ENCODE measurements at regions of chrX and their contacts with region 1.

Region 1: GRCh38 chrX:99001286-99001685 is 1408.8 kb downstream of the PCDH19 start:
- DNase-seq: no peak
- ATAC-seq: no peak

Region 2: DNA sequence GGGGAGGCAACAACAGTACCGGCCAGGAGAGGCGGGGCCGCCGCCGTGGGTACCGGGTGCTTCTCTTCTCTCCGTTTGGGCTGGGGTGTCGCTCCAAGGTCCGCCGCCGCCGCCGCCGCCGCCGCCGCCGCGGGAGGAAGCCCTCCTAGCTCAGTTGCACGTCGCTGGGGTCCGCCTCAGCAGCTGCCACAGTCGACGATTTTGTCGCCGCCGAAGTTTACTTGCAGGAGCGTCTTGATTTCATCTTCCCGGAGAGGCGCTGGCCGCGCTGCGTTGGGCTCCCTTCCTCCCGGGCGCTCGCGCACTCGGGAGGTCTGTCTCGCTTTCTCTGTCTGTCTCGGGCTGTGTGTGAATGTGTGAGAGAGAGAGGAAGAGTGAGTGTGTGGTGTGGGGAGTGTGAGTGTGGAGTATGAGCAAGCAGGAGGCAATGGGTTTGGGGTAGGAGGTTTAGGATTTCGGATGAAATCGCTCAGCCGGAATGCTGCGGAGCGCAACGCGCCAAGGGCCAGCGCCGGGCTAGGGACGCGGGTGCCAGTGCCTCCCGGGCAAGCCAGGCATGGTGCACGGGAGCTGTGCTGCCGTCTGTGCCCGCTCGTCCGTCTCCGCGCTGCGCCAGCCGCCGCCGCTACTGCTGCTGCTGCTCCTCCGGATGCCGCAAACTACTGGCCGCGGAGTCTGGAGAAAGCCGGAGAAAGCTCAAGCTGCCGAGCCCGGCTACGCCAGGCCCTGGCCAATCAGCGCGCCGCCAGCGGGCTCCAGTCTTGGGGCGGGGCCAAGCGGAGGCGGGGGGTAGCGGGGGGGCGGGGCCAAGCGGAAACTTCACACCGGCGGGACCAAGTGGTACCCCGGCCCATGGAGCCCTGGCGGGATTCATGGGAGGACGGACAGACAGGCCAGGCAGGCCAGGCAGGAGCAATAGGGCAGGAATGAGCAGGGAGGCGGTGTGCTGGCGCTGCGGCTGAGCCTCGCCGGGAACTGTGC is 1408.6 kb after region 1 on chrX and contains the start of gene PCDH19:
- intact Hi-C with region 1: loop called (anchors 5 kb)
- DNase-seq: peak; percentile 75
- ATAC-seq: peak; percentile 84
- total RNA-seq, gene PCDH19: 16.4 TPM